ENCODE measurements at regions of chr12 and their contacts with region 1.

Region 1: GRCh38 chr12:111451649-111452129 is 46.0 kb downstream of the SH2B3 start:
- DNase-seq: peak; percentile 21
- H3K4me3 Mint-ChIP-seq: peak overlapping the region; percentile 15
- H3K27ac Mint-ChIP-seq: no peak overlapping the region
- H3K4me1 Mint-ChIP-seq: peaks cover 50% of the 10 kb centered on the region
- H3K27me3 Mint-ChIP-seq: no peaks in the 10 kb centered on the region

Region 2: GRCh38 chr12:111196532-111196931 is 255.2 kb before region 1 on chr12:
- intact Hi-C with region 1: no loop called
- DNase-seq: no peak
- H3K4me3 Mint-ChIP-seq: no peak overlapping the region
- H3K27ac Mint-ChIP-seq: no peak overlapping the region
- H3K4me1 Mint-ChIP-seq: no peaks in the 10 kb centered on the region
- H3K27me3 Mint-ChIP-seq: peaks cover 3% of the 10 kb centered on the region

Region 3: GRCh38 chr12:111298582-111299436 is 152.9 kb before region 1 on chr12:
- intact Hi-C with region 1: no loop called
- DNase-seq: peak; percentile 5
- H3K4me3 Mint-ChIP-seq: no peak overlapping the region
- H3K27ac Mint-ChIP-seq: no peak overlapping the region
- H3K4me1 Mint-ChIP-seq: no peaks in the 10 kb centered on the region
- H3K27me3 Mint-ChIP-seq: no peaks in the 10 kb centered on the region

Region 4: DNA sequence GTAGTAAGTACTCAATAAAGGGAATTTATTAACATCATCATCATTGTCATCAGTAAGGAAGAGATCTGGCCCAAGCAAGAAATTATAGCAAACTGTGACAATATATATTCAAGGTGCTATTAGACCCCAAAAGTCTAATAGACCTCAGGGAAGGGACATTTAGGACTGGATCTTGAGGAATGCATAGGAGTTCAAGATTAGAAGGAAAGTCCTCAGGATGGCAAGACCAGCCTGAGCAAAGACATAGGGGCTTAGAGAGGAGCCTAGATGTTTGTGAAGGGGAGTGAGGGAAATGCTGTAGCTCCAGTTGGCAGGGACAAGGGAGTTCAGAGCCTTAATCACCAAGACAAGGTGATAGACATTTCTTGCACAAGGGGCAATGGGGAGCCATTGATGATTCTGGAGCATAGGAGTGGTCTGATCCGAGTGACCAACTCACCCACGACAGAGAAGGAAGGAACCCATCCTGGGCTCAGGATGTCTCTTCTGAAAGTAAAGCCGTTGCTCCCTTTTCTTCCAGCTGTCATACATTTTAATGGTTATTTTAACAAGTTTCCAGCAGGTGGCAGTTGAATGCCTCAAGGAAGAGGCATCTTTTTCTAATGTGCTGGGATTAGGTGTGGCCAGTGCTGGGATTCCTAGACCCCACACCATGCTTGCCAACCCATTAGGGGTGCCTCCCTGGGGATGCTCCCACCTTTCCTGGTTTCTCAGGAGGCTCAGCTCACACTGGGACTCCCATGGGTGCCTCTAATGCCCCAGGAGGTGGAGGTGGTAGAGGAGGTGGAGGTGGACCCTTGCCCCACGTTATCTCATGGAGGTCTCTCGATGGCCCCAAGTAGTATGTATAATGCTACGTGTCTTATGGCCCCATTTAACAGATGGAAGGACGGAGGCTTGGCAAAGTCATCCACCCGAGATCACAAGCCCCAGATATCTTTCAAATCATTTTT is 120.6 kb before region 1 on chr12:
- intact Hi-C with region 1: loop called (anchors 5 kb)
- DNase-seq: no peak
- H3K4me3 Mint-ChIP-seq: no peak overlapping the region
- H3K27ac Mint-ChIP-seq: no peak overlapping the region
- H3K4me1 Mint-ChIP-seq: peaks cover 5% of the 10 kb centered on the region
- H3K27me3 Mint-ChIP-seq: no peaks in the 10 kb centered on the region

Region 5: DNA sequence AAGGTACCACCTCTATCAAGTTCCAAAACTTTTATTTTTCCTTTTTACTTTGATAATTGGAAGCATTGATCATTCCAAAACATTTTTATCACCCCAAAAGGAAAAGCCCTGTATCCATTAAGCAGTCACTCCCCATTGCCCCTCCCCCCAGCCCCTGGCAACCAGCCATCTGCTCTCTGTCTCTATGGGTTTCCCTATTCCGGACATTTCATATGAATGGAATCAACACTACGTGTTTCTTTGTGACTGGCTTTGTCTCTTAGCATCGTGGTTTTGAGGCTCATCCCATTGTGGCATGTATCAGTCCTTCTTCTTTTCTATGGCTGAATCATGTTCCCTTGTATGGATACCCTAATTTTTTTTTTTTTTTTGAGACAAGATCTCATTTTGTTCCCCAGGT is 64.8 kb before region 1 on chr12:
- intact Hi-C with region 1: no loop called
- DNase-seq: no peak
- H3K4me3 Mint-ChIP-seq: no peak overlapping the region
- H3K27ac Mint-ChIP-seq: no peak overlapping the region
- H3K4me1 Mint-ChIP-seq: no peaks in the 10 kb centered on the region
- H3K27me3 Mint-ChIP-seq: peaks cover 4% of the 10 kb centered on the region

Region 6: GRCh38 chr12:111434680-111435338 is 16.9 kb before region 1 on chr12:
- intact Hi-C with region 1: loop called (anchors 2 kb)
- DNase-seq: peak; percentile 83
- H3K4me3 Mint-ChIP-seq: peak overlapping the region; percentile 68
- H3K27ac Mint-ChIP-seq: peak overlapping the region; percentile 97
- H3K4me1 Mint-ChIP-seq: peaks cover 88% of the 10 kb centered on the region
- H3K27me3 Mint-ChIP-seq: no peaks in the 10 kb centered on the region

Region 7: DNA sequence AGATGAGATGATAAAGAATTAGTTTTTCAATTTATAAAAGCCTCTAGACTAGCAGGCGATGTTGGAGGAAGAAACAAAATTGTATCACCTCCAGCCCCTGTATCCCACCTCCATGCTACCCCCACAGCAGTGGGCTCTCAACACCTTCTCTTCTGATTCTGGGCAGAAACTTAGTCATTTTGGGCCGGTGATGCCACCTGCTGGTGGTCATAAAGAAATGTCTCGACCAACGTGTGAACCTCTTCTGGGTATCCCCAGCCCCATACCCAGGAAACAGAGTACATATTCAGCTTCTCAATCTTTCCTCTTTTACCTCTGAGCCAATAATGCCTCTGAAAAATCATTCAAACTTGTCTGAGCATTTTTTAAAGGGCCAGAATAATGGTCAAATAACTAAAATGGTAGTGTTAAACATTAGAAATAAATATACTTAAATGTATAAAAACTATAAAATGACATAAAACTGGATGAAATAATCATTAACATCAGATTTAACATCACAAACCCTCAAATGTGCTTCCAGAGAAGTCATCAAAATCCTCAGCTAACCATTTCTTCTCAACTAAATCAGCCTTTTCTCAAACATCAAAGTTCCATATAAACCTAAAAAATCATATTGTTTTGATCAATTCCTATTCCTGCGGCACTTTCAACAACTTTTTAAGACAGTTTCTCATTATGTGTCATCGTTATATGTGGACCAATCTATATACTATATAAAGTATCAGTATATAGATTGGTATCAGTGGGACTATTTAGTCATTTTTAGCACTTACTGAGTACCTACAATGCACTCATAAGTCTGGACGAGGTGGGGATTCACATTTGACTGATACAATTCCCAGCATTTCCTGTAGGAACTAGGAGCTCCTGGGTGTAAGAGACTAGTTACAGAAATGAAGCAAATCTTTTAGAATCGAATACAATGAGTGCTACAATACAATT is 78.0 kb after region 1 on chr12:
- intact Hi-C with region 1: loop called (anchors 1 kb)
- DNase-seq: peak; percentile 47
- H3K4me3 Mint-ChIP-seq: no peak overlapping the region
- H3K27ac Mint-ChIP-seq: peak overlapping the region; percentile 44
- H3K4me1 Mint-ChIP-seq: peaks cover 14% of the 10 kb centered on the region
- H3K27me3 Mint-ChIP-seq: no peaks in the 10 kb centered on the region

Measured in activated T-helper 1 cell treated with anti-CD3 and anti-CD28 coated beads, Interleukin-12 subunit alpha, Interleukin-12 subunit beta, Interleukin-2, Interleukin-4 antibody, amounts not matched to agents 30 ng/mL and 10 ng/mL and 1 ng/mL, durations not matched to agents 14 hours and 24 hours and 36 hours (primary cell).